ENCODE measurements at regions of chr1 and their contacts with region 1.

Region 1: GRCh38 chr1:233668725-233669294 is 54.9 kb downstream of the KCNK1 start:
- DNase-seq: no peak
- ATAC-seq: peak in 7 of 8 donors; percentile 63 to 90 (median 78)
- H3K4me3 ChIP-seq: no peak overlapping the region
- H3K27ac ChIP-seq: peak overlapping the region in 9 of 10 donors; percentile 32 to 79 (median 64)
- H3K4me1 ChIP-seq: peaks cover 0 to 32% (median 12%) of the 10 kb centered on the region in 9 donors
- H3K27me3 ChIP-seq: no peaks in the 10 kb centered on the region
- CTCF ChIP-seq: no peak

Region 2: DNA sequence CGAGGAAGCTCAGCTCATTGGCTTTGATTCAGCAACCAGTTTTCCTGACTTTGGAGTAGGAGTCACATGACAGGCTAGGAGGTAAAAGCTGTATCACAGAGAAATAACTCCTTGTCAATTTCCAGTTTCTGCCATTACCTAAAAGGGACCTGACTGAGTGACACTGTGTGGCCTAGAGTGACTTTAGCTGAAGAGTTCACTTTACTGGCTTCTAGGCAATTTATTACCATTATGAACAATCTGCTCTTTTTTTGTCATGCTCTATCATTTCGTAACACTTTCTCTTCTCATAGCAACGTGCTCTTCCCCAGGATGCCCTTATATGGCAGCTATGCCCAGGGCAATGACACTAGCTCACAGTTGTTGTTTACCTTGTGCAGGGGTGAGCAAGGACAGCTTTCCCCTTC is 52.3 kb after region 1 on chr1:
- intact Hi-C with region 1: loop called in 4 of 10 experiments (anchors 5 to 10 kb)
- DNase-seq: no peak
- ATAC-seq: peak in 4 of 8 donors; percentile 36 to 54 (median 52)
- H3K4me3 ChIP-seq: no peak overlapping the region
- H3K27ac ChIP-seq: peak overlapping the region in 9 of 10 donors; percentile 46 to 91 (median 83)
- H3K4me1 ChIP-seq: peaks cover 2 to 40% (median 20%) of the 10 kb centered on the region in 9 donors
- H3K27me3 ChIP-seq: no peaks in the 10 kb centered on the region
- CTCF ChIP-seq: no peak

Measured in heart right ventricle (tissue), 16 donors.